AG04449 (cell line): ENCODE measurements at regions of chr22 and their contacts with region 1.

Region 1: DNA sequence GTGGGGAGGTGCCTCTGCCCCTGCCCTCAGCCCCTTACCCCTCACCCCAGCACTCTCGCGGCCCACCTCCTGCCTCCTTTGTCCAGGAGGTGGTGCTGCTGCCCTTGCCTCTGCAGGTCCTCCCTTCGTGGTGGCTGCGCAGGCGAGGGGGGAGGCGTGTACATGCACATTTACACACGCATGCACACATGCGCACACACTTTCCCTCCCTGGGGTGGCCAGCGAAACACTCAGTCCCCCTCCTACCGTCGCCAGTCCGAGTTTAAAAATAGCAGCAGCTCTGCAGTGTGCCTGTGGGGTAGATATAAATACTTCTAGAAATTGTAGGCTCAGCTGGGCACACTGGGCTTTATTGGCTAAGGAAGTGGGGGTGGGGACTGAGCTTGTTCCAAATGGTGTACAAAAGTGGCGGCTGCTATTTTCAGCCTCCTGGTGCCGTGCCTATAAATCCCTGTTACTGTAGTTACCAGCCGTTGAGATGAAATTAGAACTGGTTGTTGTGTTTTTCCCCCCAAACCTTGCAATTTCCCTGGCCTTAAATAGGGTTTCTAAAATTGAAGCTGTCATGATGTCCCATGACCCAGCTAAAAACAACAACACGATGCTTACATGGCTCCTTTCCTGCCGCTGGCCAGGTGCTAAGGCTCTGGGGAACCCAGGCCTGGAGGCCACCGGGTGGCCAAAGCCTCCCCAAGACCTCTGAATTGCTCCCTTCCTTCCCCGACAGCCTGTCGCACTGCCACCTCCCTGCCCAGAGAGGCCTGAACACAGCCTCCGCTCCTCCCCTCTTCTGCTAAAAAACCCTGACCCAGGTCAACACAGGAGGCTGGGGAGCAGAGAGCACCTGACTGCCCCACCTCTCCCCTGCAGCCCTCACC is 12.4 kb downstream of the PICK1 start:
- DNase-seq: no peak
- H3K4me3 ChIP-seq: no peak overlapping the region
- CTCF ChIP-seq: peak; percentile 44

Region 2: GRCh38 chr22:38018938-38019827 is 50.4 kb before region 1 on chr22:
- CTCF ChIA-PET with region 1: no interaction called
- POLR2A ChIA-PET with region 1: no interaction called
- DNase-seq: no peak
- H3K4me3 ChIP-seq: no peak overlapping the region
- CTCF ChIP-seq: no peak

Region 3: DNA sequence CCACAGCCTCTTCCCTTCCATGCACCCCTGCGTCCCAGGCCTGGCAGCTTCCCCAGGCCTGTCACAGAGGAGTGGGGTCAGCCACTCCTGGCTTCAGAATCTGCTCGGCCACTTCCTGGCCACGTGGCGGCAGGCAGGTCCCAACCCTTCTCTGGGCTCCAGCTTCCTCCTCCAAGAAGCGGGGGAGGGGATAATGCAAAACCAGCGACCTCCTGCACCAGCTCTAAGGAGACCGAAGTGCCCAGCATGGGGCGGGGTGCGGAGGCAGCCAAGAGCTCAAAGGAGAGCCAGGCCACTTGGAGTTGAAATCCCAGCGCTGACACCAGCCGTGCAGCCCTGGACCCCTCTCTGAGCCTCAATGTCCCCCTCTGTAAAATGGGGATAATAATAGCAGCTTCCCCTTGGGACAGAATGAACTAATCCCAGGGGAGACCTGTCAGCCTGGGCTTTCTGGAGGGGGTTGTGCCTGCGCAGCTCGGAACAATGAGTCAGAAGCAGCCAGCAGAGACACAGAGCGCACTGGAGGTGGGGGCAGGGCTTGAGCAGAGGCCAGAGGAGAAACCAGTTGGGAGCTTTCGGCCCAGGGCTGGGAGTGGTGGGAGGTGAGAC is 35.2 kb before region 1 on chr22:
- CTCF ChIA-PET with region 1: no interaction called
- POLR2A ChIA-PET with region 1: no interaction called
- DNase-seq: no peak
- H3K4me3 ChIP-seq: no peak overlapping the region
- CTCF ChIP-seq: no peak

Region 4: DNA sequence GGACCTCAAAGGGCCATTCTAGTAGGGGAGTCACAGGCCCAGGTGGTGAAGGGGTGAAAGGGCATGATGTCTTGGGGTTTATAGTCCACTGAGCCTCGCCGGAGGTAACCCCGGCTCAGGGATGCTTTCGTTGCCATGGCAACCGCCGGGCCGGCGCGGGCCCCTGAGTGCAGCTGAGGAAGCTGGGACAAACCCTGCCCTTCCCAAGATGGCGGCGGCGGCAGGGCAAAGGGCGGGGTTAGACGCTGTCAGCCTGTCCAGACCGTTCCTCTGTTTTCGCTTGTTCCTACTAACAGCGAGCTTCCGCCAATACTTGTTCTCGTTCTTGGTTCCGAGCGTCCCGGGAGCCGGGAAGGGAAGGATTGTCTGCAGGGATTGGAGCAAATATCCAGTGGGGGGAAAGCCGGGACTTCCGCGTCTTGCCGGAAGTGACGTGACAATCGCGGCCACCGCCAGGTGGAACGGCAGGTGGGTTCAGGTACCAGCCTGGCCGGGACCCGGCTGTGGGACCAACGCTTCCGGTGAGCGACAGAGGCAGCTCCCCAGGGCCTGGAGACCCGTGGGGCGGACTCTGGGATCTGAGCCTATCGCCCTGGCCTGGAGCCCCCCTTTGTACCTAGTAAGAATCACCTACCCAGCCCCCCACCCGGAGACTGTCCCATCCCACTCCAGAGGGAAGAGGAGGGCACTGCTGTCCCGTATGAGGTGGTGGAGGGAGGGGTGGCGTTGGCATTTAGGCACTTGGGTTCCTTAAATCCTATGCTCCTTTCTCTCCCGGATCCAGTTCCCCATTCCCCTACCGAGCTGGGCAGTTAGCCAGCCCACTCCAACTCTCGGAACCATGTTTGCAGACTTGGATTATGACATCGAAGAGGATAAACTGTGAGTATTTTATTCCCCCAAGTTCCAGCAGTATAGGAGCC is 12.4 kb before region 1 on chr22 and contains the start of gene PICK1:
- CTCF ChIA-PET with region 1: interaction called, 57 read pairs
- POLR2A ChIA-PET with region 1: no interaction called
- DNase-seq: peak; percentile 52
- H3K4me3 ChIP-seq: peak within 1 kb of the TSS; percentile 77
- CTCF ChIP-seq: no peak

Region 5: GRCh38 chr22:38353142-38353629 is 283.6 kb after region 1 on chr22:
- CTCF ChIA-PET with region 1: interaction called, 14 read pairs
- POLR2A ChIA-PET with region 1: no interaction called
- DNase-seq: no peak
- H3K4me3 ChIP-seq: no peak overlapping the region
- CTCF ChIP-seq: peak; percentile 87